ENCODE measurements at regions of chr2 and their contacts with region 1.

Region 1: DNA sequence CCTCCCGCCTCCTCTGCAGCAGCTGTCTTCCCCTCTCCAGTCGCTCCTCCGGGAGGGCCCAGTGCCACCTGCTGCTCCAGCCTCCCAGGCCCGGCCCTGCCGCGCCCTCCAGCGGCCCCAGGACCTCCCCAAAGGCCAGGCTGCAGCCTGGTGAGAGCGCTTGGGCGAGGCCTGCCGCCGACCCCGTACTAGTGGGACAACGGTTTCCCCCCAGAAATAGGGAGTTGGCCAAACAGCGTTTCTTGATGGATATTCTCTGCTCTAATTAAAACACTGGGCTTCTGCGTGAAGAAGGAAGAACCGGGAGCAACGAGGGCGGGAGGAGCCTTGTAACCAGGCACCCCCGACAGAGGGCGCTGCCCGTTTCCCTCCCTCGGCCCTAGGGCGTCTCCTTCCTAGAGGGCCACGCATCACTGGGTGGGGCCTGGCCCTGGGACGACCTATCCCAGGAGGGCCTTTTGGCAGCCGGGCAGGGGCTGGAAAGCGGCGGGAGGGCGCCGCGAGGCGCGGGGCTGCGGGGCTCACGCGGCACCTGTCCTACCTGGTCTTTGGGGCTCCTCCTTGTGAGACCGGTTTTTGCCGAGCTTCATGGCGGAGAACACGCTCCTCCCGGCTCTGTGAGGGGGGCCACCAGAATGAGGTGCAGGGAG is 25.4 kb upstream of the OTOF start:
- DNase-seq: peak; percentile 45
- H3K4me3 ChIP-seq: peak overlapping the region; percentile 53
- H3K27ac ChIP-seq: no peak overlapping the region
- H3K4me1 ChIP-seq: no peaks in the 10 kb centered on the region
- CTCF ChIP-seq: peak; percentile 81

Region 2: GRCh38 chr2:25867396-25868003 is 635.9 kb before region 1 on chr2:
- CTCF ChIA-PET with region 1: no interaction called
- POLR2A ChIA-PET with region 1: no interaction called
- intact Hi-C with region 1: no loop called
- DNase-seq: no peak
- H3K4me3 ChIP-seq: no peak overlapping the region
- H3K27ac ChIP-seq: no peak overlapping the region
- H3K4me1 ChIP-seq: no peaks in the 10 kb centered on the region
- CTCF ChIP-seq: no peak

Region 3: GRCh38 chr2:26577434-26578112 is 74.2 kb after region 1 on chr2:
- CTCF ChIA-PET with region 1: no interaction called
- POLR2A ChIA-PET with region 1: no interaction called
- intact Hi-C with region 1: loop called (anchors 5 kb)
- DNase-seq: peak; percentile 70
- H3K4me3 ChIP-seq: no peak overlapping the region
- H3K27ac ChIP-seq: no peak overlapping the region
- H3K4me1 ChIP-seq: no peaks in the 10 kb centered on the region
- CTCF ChIP-seq: peak; percentile 92